Vagina (tissue), 2 donors: ENCODE measurements at regions of chr15 and their contacts with region 1.

Region 1: GRCh38 chr15:34587717-34588674 is 4.5 kb upstream of the GOLGA8B start:
- DNase-seq: no peak
- H3K4me3 ChIP-seq: peak overlapping the region; percentile 13 to 14
- H3K27ac ChIP-seq: no peak overlapping the region
- H3K4me1 ChIP-seq: peaks cover 8% of the 10 kb centered on the region
- H3K27me3 ChIP-seq: no peaks in the 10 kb centered on the region
- CTCF ChIP-seq: peak; percentile 51 to 75 (median 57)
- POLR2A ChIP-seq: no peak

Region 2: DNA sequence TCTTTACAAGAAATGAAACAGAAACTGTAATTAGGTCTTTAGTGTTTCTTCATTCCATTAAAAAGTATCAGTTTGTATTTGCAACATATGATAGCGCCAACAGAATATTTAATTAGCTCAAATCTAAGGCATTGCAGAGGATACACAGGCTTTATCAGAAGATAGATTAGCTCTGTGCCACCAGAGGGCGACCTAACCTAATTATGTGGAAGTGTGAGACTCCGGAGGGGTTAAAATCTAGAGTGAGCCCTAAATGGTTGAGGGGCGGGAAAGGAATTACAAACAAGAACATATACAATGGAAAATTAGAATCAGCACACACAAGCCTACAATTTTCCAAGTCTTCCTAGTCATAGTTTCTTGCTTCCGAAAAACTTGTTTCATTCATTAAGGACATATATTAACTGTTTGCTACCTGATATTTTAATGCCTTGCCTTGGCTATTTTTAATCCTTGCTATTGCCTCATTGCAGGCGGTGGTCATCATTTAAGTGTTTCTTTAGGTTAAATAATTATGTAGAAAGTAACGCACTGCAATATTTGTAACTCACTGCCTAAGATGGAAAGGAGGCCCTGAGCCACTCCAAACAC is 1295.2 kb before region 1 on chr15:
- intact Hi-C with region 1: no loop called
- DNase-seq: no peak
- H3K4me3 ChIP-seq: no peak overlapping the region
- H3K27ac ChIP-seq: no peak overlapping the region
- H3K4me1 ChIP-seq: no peaks in the 10 kb centered on the region
- H3K27me3 ChIP-seq: no peaks in the 10 kb centered on the region
- CTCF ChIP-seq: peak in 2 of 3 experiments; percentile 42 to 50
- POLR2A ChIP-seq: no peak

Region 3: DNA sequence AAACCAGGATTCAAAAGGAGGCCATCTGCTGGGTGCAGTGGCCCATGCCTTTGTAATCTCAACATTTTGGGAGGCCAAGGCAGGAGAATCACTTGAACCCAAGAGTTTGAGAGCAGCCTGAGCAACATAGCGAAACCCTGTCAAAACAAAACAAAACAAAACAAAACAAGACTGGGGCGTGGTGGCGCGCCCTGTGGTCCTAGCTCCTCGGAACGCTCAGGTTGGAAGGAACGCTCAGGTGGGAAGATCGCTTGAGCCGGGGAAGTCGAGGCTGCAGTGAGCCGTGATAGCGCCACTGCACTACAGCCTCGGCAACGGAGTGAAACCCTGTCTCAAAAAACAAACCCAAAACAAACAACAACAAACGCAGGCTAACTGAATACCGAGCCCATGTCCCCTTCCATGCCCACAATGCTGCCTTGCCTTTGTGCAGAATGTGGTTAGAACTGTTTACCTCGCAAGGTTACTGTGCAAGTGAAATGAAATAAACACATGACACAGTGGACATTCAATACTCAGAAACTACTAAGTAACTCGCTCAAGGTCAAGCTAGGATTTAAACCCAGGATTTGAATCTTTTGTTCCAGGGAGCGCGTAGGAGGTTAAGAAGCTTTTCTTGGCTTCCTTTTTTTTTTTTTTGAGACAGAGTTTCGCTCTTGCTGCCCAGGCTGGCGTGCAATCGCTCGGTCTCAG is 363.9 kb before region 1 on chr15:
- intact Hi-C with region 1: loop called (anchors 10 kb)
- DNase-seq: no peak
- H3K4me3 ChIP-seq: peak overlapping the region; percentile 65 to 78
- H3K27ac ChIP-seq: peak overlapping the region; percentile 88
- H3K4me1 ChIP-seq: peaks cover 24% of the 10 kb centered on the region
- H3K27me3 ChIP-seq: no peaks in the 10 kb centered on the region
- CTCF ChIP-seq: no peak
- POLR2A ChIP-seq: no peak